ENCODE measurements at regions of chr5 and their contacts with region 1.

Region 1: DNA sequence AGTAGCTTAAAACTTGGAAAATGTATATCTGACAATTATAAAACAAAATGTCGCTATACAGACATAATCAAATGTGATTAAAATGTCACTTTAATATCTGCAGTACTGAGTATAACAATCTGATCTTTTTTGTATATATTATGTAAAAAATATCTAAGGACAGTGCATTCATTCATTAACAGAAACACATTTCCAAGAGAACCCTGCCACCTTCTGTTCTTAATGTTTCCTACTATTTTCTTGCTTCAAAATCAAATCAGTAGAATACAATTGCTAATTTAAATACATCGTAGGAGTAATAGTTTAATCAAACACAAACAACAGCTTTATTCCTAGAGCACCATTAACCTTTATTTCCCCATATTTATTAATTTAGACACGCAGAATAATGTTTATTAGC is 142.6 kb upstream of the ST8SIA4 start:
- DNase-seq: no peak
- ATAC-seq: no peak
- H3K4me3 Mint-ChIP-seq: no peak overlapping the region
- H3K27ac Mint-ChIP-seq: no peak overlapping the region
- H3K4me1 Mint-ChIP-seq: no peaks in the 10 kb centered on the region
- H3K27me3 Mint-ChIP-seq: no peaks in the 10 kb centered on the region
- CTCF ChIP-seq: no peak

Region 2: GRCh38 chr5:99104538-99105132 is 1941.1 kb before region 1 on chr5:
- CTCF ChIA-PET with region 1: no interaction called
- POLR2A ChIA-PET with region 1: no interaction called
- intact Hi-C with region 1: loop called (anchors 2 kb)
- DNase-seq: no peak
- ATAC-seq: no peak
- H3K4me3 Mint-ChIP-seq: no peak overlapping the region
- H3K27ac Mint-ChIP-seq: no peak overlapping the region
- H3K4me1 Mint-ChIP-seq: no peaks in the 10 kb centered on the region
- H3K27me3 Mint-ChIP-seq: peaks cover 4% of the 10 kb centered on the region
- CTCF ChIP-seq: no peak

Region 3: GRCh38 chr5:100479079-100479688 is 566.5 kb before region 1 on chr5:
- CTCF ChIA-PET with region 1: no interaction called
- POLR2A ChIA-PET with region 1: no interaction called
- intact Hi-C with region 1: loop called (anchors 1 kb)
- DNase-seq: no peak
- ATAC-seq: no peak
- H3K4me3 Mint-ChIP-seq: no peak overlapping the region
- H3K27ac Mint-ChIP-seq: no peak overlapping the region
- H3K4me1 Mint-ChIP-seq: no peaks in the 10 kb centered on the region
- H3K27me3 Mint-ChIP-seq: peaks cover 3% of the 10 kb centered on the region
- CTCF ChIP-seq: no peak

Region 4: GRCh38 chr5:100697970-100698369 is 347.7 kb before region 1 on chr5:
- CTCF ChIA-PET with region 1: interaction called, 4 read pairs
- POLR2A ChIA-PET with region 1: no interaction called
- intact Hi-C with region 1: loop called (anchors 1 kb)
- DNase-seq: no peak
- ATAC-seq: no peak
- H3K4me3 Mint-ChIP-seq: no peak overlapping the region
- H3K27ac Mint-ChIP-seq: no peak overlapping the region
- H3K4me1 Mint-ChIP-seq: no peaks in the 10 kb centered on the region
- H3K27me3 Mint-ChIP-seq: peaks cover 4% of the 10 kb centered on the region
- CTCF ChIP-seq: no peak

Region 5: DNA sequence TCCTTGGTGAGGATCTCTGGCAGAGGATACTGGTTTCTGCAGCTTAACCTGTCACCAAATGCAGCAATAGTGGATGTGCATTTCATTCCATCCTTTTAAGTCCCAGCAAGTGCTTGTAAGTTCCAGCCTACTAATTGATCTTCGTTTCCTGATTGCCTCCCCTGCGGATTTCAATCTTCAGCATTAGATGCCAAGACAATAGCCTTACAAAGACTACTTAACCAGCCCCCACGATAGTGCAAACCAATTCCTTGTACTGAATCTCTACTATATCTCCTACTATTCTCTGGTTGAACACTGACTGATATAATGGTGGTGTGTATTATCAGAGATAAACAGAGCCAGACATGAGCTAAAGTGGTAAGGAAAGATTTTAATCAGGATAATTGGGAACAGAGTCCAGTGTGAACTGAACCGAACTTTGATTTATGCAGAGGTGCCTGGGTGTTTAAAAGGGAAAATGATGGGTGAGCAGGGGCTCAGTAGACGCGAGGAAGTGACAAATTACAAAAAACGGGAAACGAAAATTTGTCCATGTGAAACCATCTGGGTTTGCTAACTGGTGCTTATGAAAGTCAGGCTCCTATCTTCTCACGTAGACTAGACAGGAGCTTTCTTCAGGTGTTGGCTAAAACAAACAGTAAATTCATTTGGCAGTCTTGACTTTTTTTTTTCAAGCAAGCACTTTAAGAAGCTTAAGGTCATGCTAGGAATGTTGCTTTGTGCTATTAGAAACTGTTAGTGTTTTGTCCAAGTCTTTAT is 35.8 kb before region 1 on chr5:
- CTCF ChIA-PET with region 1: no interaction called
- POLR2A ChIA-PET with region 1: no interaction called
- intact Hi-C with region 1: no loop called
- DNase-seq: no peak
- ATAC-seq: peak; percentile 60
- H3K4me3 Mint-ChIP-seq: no peak overlapping the region
- H3K27ac Mint-ChIP-seq: no peak overlapping the region
- H3K4me1 Mint-ChIP-seq: peaks cover 7% of the 10 kb centered on the region
- H3K27me3 Mint-ChIP-seq: no peaks in the 10 kb centered on the region
- CTCF ChIP-seq: no peak

Region 6: DNA sequence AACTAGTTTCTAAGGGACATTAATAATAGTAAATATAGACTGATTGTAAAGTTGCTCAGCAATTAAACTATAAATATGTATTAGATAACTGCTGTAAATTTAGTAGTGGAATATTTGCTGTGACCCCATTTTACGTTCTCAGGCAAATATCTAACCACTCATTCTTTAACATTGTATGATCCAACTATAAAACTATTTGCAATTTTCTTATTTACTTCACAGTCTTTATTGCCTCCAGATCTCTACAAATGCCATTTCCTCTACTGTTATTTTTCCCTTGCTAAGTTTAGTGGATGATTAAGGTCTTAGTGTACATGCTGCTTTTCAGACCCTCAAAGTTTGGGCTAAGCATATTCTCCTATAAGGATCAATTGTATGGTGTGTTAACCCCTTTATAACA is 383.6 kb after region 1 on chr5:
- CTCF ChIA-PET with region 1: no interaction called
- POLR2A ChIA-PET with region 1: no interaction called
- intact Hi-C with region 1: no loop called
- DNase-seq: no peak
- ATAC-seq: no peak
- H3K4me3 Mint-ChIP-seq: no peak overlapping the region
- H3K27ac Mint-ChIP-seq: no peak overlapping the region
- H3K4me1 Mint-ChIP-seq: no peaks in the 10 kb centered on the region
- H3K27me3 Mint-ChIP-seq: no peaks in the 10 kb centered on the region
- CTCF ChIP-seq: no peak

Measured in activated B cell treated with CpG ODN at 0.5 μM for 24 hours (primary cell).